Activated naive CD8-positive, alpha-beta T cell treated with anti-CD3 and anti-CD28 coated beads, Interleukin-2, amount 10 ng/mL, durations not matched to agents 7 days and 5 days (primary cell): ENCODE measurements at regions of chr1 and their contacts with region 1.

Region 1: DNA sequence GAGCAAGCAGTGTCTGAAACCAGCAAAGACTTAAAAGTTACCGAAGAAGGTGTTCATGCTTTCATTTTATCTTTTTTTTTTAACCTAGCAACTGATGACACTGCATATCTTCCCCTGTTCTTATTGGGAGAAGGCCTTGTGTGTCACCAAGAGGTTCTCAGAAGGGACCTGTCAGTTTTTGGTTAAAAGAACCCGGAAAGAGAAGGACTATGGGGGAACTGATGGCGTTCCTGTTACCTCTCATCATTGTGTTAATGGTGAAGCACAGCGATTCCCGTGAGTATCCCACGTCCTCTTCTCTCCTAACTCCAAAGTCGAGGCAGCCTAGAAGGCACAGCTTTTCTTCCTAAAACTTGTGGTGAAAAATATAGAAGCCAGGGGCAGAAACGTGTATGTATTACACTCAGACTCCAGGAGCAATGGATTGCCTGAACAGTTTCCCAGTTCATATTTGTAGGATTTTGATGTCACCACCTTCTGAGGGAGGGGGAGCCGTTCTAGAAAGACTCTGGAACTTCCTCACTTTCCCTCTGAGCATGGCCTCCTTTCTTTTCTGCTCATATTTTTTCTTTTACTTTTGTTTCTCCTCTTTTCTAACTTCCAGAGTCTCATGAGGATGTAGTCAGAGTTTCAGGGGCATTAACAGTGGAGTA is at the start of gene MR1:
- DNase-seq: no peak
- ATAC-seq: peak; percentile 95
- H3K4me3 Mint-ChIP-seq: peak within 1 kb of the TSS; percentile 92
- H3K27ac Mint-ChIP-seq: peak within 1 kb of the TSS; percentile 99
- H3K4me1 Mint-ChIP-seq: peaks cover 46% of the 10 kb centered on the region
- H3K27me3 Mint-ChIP-seq: peaks cover 2% of the 10 kb centered on the region
- total RNA-seq, gene MR1: 39.2 to 40.0 TPM

Region 2: DNA sequence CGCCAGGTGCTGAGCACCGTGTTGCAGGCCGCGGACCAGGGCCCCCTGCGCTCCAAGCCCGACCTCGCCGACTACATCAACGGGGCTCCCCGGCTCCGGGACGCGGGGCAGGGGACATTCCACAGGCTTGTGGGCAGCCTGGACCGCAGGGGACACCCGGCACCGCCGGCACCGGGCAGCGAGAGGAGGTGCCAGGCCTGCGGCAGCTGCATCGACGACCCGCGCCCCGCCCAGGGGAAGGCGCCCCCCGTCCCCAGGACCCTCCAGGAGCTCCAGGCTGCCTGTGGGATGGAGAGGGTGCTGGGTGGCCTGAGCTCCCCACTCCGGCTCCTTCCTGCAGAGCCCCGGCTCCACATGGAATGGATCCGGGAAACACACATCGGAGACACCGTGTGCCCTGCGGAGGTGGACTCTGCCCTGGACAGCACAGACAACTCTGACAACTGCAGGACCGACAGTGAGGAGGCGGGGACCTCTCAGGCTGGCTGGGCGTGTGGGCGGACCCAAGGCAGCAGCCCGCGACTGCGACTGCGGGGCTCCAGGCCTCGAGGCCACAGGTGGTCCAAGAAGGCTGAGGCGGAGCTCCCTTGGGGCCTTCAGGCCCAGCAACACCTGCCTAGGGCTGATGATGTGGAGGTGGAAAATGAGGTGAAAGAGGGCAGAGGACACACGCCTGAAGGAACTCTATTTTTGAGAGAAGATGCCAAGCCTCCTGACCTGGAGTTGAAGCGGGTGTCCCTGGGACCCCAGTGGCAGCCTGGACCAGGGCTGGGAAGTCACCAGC is 98.4 kb before region 1 on chr1:
- POLR2A ChIA-PET with region 1: no interaction called
- DNase-seq: no peak
- ATAC-seq: no peak
- H3K4me3 Mint-ChIP-seq: no peak overlapping the region
- H3K27ac Mint-ChIP-seq: no peak overlapping the region
- H3K4me1 Mint-ChIP-seq: peaks cover 10% of the 10 kb centered on the region
- H3K27me3 Mint-ChIP-seq: no peaks in the 10 kb centered on the region

Region 3: DNA sequence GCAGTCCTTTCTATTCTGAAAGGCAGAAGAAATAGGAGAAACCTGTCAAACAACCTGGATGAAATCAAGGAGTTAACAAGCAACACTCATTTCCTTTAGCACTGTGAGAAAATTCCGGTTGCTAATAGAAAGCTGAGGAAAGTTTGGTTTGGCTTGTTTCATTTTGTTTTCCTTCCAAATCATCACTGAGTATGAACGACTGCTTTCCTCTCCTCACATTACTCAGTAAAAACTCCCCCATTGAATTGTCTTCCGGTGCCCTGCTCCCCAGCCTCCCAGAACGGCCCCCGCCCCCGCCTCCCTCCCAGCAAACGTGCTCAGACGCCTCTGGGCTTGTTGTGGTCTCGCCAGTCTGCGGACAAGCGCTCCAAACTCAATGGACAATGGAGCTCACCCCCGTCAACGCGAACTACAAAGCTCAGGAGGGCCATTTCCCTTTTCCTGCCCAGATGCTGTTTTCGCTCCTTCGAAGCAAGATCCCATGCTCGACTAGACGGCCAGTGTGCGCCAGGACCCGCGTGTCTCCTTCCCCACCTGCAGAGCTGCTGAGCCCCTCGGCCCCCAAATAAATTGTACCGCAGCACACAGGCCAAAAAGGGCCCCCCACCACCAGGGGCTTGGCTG is 12.0 kb before region 1 on chr1:
- POLR2A ChIA-PET with region 1: interaction called, 47 read pairs
- DNase-seq: peak; percentile 65
- ATAC-seq: peak; percentile 49
- H3K4me3 Mint-ChIP-seq: peak overlapping the region; percentile 91
- H3K27ac Mint-ChIP-seq: peak overlapping the region; percentile 96
- H3K4me1 Mint-ChIP-seq: peaks cover 34% of the 10 kb centered on the region
- H3K27me3 Mint-ChIP-seq: peaks cover 11% of the 10 kb centered on the region

Region 4: GRCh38 chr1:181142096-181142958 is 108.4 kb after region 1 on chr1:
- POLR2A ChIA-PET with region 1: interaction called, 10 read pairs
- DNase-seq: peak; percentile 94
- ATAC-seq: peak; percentile 88
- H3K4me3 Mint-ChIP-seq: peak overlapping the region; percentile 67
- H3K27ac Mint-ChIP-seq: peak overlapping the region; percentile 76
- H3K4me1 Mint-ChIP-seq: peaks cover 54% of the 10 kb centered on the region
- H3K27me3 Mint-ChIP-seq: peaks cover 19% of the 10 kb centered on the region